ENCODE measurements at regions of chr15 and their contacts with region 1.

Region 1: DNA sequence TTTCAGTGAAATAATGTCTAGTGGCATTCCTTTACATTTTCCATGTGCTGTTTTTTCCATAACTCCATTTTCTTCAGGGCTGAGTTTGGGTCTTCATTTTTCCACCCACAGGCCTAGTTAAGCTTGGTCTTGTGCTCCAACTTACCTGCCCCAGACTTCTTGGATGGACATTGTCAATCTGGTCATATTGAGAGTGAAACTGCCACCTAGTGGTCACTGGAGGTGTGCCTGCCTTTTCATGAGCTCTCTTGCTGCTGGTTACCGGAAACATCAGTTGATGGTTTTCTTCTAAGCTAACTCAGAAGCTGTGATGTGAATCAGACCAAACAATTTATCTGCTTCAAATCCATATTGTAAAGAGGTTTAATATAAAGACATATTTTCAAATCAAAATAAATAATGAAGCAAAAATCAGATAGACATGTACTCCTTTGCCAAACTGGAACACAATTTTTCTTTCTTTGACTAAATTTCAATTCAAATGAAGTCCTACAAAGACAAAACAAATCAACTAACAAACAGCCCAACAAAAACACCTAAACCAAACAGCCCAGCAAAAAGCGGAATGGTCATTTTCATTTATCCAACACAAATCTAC is 135.1 kb upstream of the RASGRP1 start:
- DNase-seq: peak; percentile 65
- ATAC-seq: peak; percentile 38; the same call in 1 of the 2 replicates
- H3K4me3 ChIP-seq: no peak overlapping the region
- H3K27ac ChIP-seq: no peak overlapping the region
- H3K4me1 ChIP-seq: peaks cover 14% of the 10 kb centered on the region; the same call in 1 of the 2 replicates
- H3K27me3 ChIP-seq: no peaks in the 10 kb centered on the region
- CTCF ChIP-seq: peak; percentile 66
- POLR2A ChIP-seq: no peak
- RAD21 ChIP-seq: peak; percentile 52

Region 2: GRCh38 chr15:38589502-38589901 is 110.2 kb before region 1 on chr15:
- CTCF ChIA-PET with region 1: no interaction called
- POLR2A ChIA-PET with region 1: no interaction called
- dilution Hi-C with region 1: no loop called
- in situ Hi-C with region 1: no loop called
- intact Hi-C with region 1: no loop called
- DNase-seq: peak; percentile 85
- ATAC-seq: peak; percentile 72
- H3K4me3 ChIP-seq: no peak overlapping the region
- H3K27ac ChIP-seq: no peak overlapping the region
- H3K4me1 ChIP-seq: no peaks in the 10 kb centered on the region
- H3K27me3 ChIP-seq: peaks cover 37% of the 10 kb centered on the region
- CTCF ChIP-seq: no peak
- POLR2A ChIP-seq: no peak
- RAD21 ChIP-seq: no peak

Region 3: GRCh38 chr15:39312984-39313383 is 613.3 kb after region 1 on chr15:
- CTCF ChIA-PET with region 1: no interaction called
- POLR2A ChIA-PET with region 1: no interaction called
- dilution Hi-C with region 1: no loop called
- in situ Hi-C with region 1: loop called (anchors 25 kb)
- intact Hi-C with region 1: no loop called
- DNase-seq: no peak
- ATAC-seq: no peak
- H3K4me3 ChIP-seq: no peak overlapping the region
- H3K27ac ChIP-seq: no peak overlapping the region
- H3K4me1 ChIP-seq: peaks cover 17% of the 10 kb centered on the region
- H3K27me3 ChIP-seq: no peaks in the 10 kb centered on the region
- CTCF ChIP-seq: no peak
- POLR2A ChIP-seq: no peak
- RAD21 ChIP-seq: no peak

Measured in IMR-90 (cell line).